Heart right ventricle (tissue), 16 donors: ENCODE measurements at regions of chr2 and their contacts with region 1.

Region 1: GRCh38 chr2:43219383-43220228 is 6.8 kb downstream of the ZFP36L2 start:
- DNase-seq: peak; percentile 90 to 91
- ATAC-seq: peak; percentile 72 to 89 (median 80)
- H3K4me3 ChIP-seq: peak overlapping the region in 9 of 10 donors; percentile 30 to 96 (median 88)
- H3K27ac ChIP-seq: peak overlapping the region; percentile 96 to 100 (median 99)
- H3K4me1 ChIP-seq: peaks cover 14 to 84% (median 65%) of the 10 kb centered on the region in 9 donors
- H3K27me3 ChIP-seq: no peaks in the 10 kb centered on the region
- CTCF ChIP-seq: peak in 3 of 9 donors; percentile 16 to 32 (median 16)

Region 2: DNA sequence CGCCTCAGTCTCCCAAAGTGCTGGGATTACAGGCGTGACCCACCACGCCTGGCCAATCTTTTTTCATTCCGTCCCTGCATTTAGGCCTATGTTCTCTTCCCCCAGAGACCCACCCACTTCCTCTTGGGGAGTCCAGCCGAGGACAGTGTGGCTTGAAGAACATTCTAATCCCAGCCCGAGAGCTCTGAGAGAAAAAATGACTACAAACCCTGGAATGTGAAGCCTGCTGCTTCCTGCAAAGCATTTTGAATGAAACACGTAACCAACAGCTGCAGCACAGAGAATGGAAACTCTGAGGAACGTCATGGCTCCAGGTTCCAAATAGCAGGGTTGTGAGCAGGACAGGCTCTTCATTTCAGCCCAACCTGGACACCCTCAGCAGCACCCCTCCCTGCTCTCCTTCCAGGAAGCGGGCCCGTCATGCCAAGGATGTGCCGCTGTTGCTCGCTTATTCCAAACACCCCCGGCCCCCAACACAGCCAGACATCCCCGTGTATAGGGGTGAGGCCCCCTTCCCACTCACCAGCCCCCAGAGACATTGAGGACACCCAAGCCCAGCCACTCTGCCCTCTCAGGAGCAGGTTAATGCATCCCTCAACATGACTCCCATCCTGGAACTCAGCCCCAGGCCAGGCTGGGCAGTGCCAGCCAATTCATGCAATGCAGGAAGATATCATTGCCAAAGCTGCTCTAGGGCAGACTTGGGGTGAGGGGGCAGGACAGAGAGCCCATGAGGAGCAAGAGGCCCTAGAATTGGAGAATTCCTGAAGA is 133.0 kb before region 1 on chr2:
- intact Hi-C with region 1: loop called in 2 of 10 experiments (anchors 5 to 10 kb)
- DNase-seq: peak; percentile 51 to 88
- ATAC-seq: peak; percentile 75 to 89 (median 84)
- H3K4me3 ChIP-seq: no peak overlapping the region
- H3K27ac ChIP-seq: peak overlapping the region; percentile 76 to 93 (median 90)
- H3K4me1 ChIP-seq: peaks cover 48 to 67% (median 61%) of the 10 kb centered on the region in 9 donors
- H3K27me3 ChIP-seq: no peaks in the 10 kb centered on the region
- CTCF ChIP-seq: no peak

Region 3: GRCh38 chr2:43158259-43158880 is 61.2 kb before region 1 on chr2:
- intact Hi-C with region 1: loop called in 5 of 10 experiments (anchors 2 to 10 kb)
- DNase-seq: peak; percentile 58 to 61
- ATAC-seq: peak; percentile 21 to 70 (median 65)
- H3K4me3 ChIP-seq: no peak overlapping the region
- H3K27ac ChIP-seq: peak overlapping the region; percentile 21 to 88 (median 80)
- H3K4me1 ChIP-seq: peaks cover 10 to 52% (median 33%) of the 10 kb centered on the region in 9 donors
- H3K27me3 ChIP-seq: no peaks in the 10 kb centered on the region
- CTCF ChIP-seq: no peak

Region 4: DNA sequence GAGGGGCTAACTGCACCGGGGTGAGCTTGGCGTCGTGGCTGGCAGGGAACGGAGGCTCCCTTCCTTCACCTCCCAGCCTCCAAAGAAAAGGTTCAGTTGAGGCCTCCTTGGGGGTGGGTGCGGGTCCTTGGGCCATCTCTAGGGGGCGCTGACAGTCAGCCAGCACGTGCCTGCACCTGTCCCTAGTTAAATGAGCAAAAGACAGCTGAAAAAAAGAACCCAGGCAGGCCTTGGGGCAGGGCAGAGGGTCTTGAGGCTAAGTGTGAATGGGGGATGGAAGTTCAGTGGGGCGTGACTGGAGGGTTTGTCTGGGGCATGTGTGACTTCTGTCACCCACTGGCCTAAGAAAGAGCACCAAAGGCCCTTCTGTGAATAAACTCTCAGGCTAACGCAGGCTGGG is 49.6 kb before region 1 on chr2:
- intact Hi-C with region 1: loop called in 5 of 10 experiments (anchors 5 kb)
- DNase-seq: no peak
- ATAC-seq: no peak
- H3K4me3 ChIP-seq: no peak overlapping the region
- H3K27ac ChIP-seq: peak overlapping the region in 4 of 10 donors; percentile 32 to 89 (median 72)
- H3K4me1 ChIP-seq: peaks cover 9 to 78% (median 43%) of the 10 kb centered on the region in 9 donors
- H3K27me3 ChIP-seq: no peaks in the 10 kb centered on the region
- CTCF ChIP-seq: peak in 8 of 9 donors; percentile 11 to 57 (median 42)

Region 5: GRCh38 chr2:43178602-43179542 is 40.7 kb before region 1 on chr2:
- intact Hi-C with region 1: loop called in 5 of 10 experiments (anchors 5 kb)
- DNase-seq: peak; percentile 68 to 73
- ATAC-seq: peak; percentile 78 to 92 (median 84)
- H3K4me3 ChIP-seq: peak overlapping the region in 1 of 10 donors; percentile 5
- H3K27ac ChIP-seq: peak overlapping the region; percentile 17 to 90 (median 75)
- H3K4me1 ChIP-seq: peaks cover 5 to 53% (median 25%) of the 10 kb centered on the region in 9 donors
- H3K27me3 ChIP-seq: no peaks in the 10 kb centered on the region
- CTCF ChIP-seq: no peak

Region 6: DNA sequence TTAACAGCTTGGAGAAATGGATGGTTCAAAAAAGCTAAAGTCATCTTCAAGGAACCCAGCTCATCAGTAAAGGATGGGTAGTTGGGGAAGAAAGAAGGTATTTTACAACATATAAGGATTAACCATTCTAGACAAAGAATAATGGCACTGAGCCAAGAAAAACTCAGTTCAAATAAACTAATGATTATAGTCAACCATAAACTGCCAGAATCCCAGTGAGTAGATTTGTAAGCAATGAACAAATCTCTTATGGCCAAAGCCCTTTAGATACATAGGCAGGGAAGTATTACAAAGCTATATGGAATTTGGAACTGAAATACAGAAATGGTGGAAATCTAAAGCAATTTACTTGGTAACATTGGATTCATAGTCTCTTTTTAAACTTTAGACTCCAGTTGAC is 99.2 kb after region 1 on chr2:
- intact Hi-C with region 1: no loop called
- DNase-seq: no peak
- ATAC-seq: no peak
- H3K4me3 ChIP-seq: no peak overlapping the region
- H3K27ac ChIP-seq: no peak overlapping the region
- H3K4me1 ChIP-seq: peaks cover 0 to 14% (median 6%) of the 10 kb centered on the region in 9 donors
- H3K27me3 ChIP-seq: no peaks in the 10 kb centered on the region
- CTCF ChIP-seq: no peak

Region 7: GRCh38 chr2:43408407-43409160 is 189.0 kb after region 1 on chr2:
- intact Hi-C with region 1: no loop called
- DNase-seq: no peak
- ATAC-seq: peak in 6 of 8 donors; percentile 31 to 71 (median 42)
- H3K4me3 ChIP-seq: no peak overlapping the region
- H3K27ac ChIP-seq: peak overlapping the region in 2 of 10 donors; percentile 2 to 84
- H3K4me1 ChIP-seq: peaks cover 0 to 53% (median 39%) of the 10 kb centered on the region in 9 donors
- H3K27me3 ChIP-seq: no peaks in the 10 kb centered on the region
- CTCF ChIP-seq: no peak